Dendritic cell treated with granulocyte-macrophage colony-stimulating factor and Interleukin-4, amounts not matched to agents 40 ng/mL and 50 ng/mL, for 4 days (primary cell): ENCODE measurements at regions of chr2 and their contacts with region 1.

Region 1: DNA sequence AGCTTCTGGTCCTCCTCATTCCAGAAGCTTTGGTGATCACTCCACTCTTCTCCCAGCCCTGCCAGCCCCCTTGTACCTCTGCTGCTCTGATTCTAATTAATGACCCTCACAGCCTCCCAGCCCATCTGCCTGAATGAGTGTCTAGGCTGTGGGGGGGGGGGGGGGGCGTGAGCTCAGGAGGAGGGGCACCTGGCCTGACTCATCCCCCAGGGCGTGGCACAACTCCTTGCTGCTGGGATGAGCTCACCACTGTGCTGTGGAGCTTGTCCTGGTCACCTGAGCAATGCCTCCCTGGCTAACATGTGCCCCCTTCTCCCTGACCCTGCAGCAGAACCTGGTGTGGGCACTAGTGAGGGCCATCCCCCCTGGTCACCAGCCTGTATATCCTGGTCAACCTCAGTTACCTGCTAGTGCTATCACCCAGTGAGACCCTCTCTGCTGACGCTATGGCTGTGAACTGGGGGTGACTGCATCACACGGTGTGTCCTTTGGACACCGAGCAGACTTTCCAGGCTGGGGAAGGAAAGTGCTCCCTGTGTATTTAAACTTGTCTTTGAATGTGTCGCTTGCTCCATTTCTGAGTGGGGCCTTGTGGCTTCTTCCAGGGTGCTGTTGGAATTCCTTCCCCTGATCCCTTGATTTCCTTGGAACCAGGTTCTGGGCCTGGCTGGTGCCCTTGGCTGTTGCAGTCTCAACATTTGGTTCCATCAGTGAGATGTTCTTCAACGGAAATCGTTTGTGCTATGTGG is 41.5 kb upstream of the PUM2 start:
- H3K4me3 Mint-ChIP-seq: no peak overlapping the region
- H3K27ac Mint-ChIP-seq: peak overlapping the region; percentile 15
- H3K4me1 Mint-ChIP-seq: no peaks in the 10 kb centered on the region
- H3K27me3 Mint-ChIP-seq: peaks cover 13% of the 10 kb centered on the region

Region 2: GRCh38 chr2:20356042-20356441 is 36.1 kb before region 1 on chr2:
- intact Hi-C with region 1: no loop called
- H3K4me3 Mint-ChIP-seq: no peak overlapping the region
- H3K27ac Mint-ChIP-seq: no peak overlapping the region
- H3K4me1 Mint-ChIP-seq: peaks cover 24% of the 10 kb centered on the region
- H3K27me3 Mint-ChIP-seq: no peaks in the 10 kb centered on the region

Region 3: GRCh38 chr2:20635675-20636584 is 243.8 kb after region 1 on chr2:
- intact Hi-C with region 1: loop called (anchors 2 kb)
- H3K4me3 Mint-ChIP-seq: no peak overlapping the region
- H3K27ac Mint-ChIP-seq: no peak overlapping the region
- H3K4me1 Mint-ChIP-seq: peaks cover 6% of the 10 kb centered on the region
- H3K27me3 Mint-ChIP-seq: no peaks in the 10 kb centered on the region

Region 4: DNA sequence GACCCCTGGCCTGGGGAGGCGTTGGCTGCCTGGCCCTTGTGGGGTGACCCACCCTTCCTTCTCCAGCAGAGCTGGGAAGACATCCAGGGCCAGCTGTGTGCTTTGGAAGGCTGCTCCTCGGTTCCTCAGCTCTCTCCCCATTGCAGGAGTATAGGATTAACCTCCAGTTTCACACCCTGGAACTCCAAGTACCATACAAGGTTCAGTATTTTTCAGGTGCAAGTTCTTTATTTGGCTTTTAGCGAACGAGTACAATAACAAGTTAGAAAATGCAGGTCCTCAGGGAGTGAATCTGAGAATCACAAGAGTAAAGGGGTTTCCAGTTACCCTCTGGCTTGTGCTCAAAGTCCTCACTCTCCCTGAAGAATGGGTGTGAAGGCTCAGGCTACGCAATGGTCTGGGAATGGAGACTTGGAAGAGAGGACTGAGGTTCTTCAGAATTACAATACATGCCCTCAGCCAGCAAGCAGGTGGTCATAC is 550.6 kb after region 1 on chr2:
- intact Hi-C with region 1: loop called (anchors 10 kb)
- H3K4me3 Mint-ChIP-seq: no peak overlapping the region
- H3K27ac Mint-ChIP-seq: no peak overlapping the region
- H3K4me1 Mint-ChIP-seq: no peaks in the 10 kb centered on the region
- H3K27me3 Mint-ChIP-seq: peaks cover 3% of the 10 kb centered on the region